ENCODE measurements at regions of chr6 and their contacts with region 1.

Region 1: GRCh38 chr6:81766482-81767069 is 14.1 kb upstream of the TENT5A start:
- DNase-seq: peak; percentile 93
- ATAC-seq: peak; percentile 60
- H3K4me3 ChIP-seq: no peak overlapping the region
- H3K27ac ChIP-seq: peak overlapping the region; percentile 55; the same call in 1 of the 2 replicates
- H3K4me1 ChIP-seq: peaks cover 14% of the 10 kb centered on the region
- H3K27me3 ChIP-seq: no peaks in the 10 kb centered on the region
- CTCF ChIP-seq: no peak
- POLR2A ChIP-seq: no peak
- RAD21 ChIP-seq: no peak

Region 2: DNA sequence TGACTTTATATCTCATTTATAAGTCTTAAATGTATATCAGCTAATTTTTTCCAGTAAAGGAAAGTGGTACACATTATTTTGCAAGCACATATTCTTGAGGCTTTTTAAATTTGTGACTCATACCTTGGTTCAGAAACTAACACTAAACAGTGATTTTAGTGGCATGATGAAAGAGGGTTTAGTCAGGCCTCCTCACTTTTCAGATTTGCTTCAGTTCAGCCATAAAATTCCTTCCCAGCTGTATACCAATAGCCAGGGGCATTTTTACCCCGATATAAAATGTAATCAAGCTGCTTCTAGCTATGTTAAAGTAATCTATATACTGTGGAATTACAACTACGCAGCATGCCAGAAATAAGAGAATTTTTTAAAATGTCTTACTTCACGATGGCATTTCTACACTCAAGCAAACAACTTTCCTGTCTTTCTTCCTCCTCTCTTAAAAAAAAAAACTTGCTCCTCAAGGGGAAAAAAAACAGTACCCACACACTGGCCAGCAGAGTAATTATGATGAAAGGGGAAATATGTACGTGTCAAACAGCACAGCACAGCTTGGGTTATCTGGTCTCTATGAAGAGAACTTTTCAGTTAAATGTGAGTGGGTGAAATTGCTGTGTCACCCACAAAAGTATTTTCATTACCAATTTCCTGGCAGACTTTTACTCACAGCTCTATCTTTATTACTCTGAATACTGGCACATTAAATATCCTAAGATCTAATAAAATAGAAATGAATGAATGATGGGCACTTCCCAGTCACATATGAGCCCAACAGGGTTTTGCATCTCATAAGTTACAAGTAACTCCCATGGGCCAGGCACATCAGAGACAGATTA is 230.7 kb after region 1 on chr6:
- CTCF ChIA-PET with region 1: no interaction called
- POLR2A ChIA-PET with region 1: no interaction called
- dilution Hi-C with region 1: no loop called
- in situ Hi-C with region 1: no loop called
- intact Hi-C with region 1: loop called (anchors 5 kb)
- DNase-seq: peak; percentile 88
- ATAC-seq: peak; percentile 73
- H3K4me3 ChIP-seq: no peak overlapping the region
- H3K27ac ChIP-seq: peak overlapping the region; percentile 61
- H3K4me1 ChIP-seq: peaks cover 19% of the 10 kb centered on the region
- H3K27me3 ChIP-seq: no peaks in the 10 kb centered on the region
- CTCF ChIP-seq: no peak
- POLR2A ChIP-seq: 0 out of 2 replicates have a peak, but pooled peaks have one; percentile 20
- RAD21 ChIP-seq: no peak

Measured in IMR-90 (cell line).